Transverse colon (tissue), 4 donors: ENCODE measurements at regions of chr1 and their contacts with region 1.

Region 1: GRCh38 chr1:67853704-67854103 is 20.4 kb upstream of the GNG12 start:
- DNase-seq: peak; percentile 52
- H3K4me3 ChIP-seq: no peak overlapping the region
- H3K27ac ChIP-seq: no peak overlapping the region
- H3K4me1 ChIP-seq: peaks cover 5 to 12% (median 8%) of the 10 kb centered on the region in 4 donors
- H3K27me3 ChIP-seq: no peaks in the 10 kb centered on the region
- CTCF ChIP-seq: peak; percentile 48 to 75 (median 61)
- EP300 ChIP-seq: no peak
- POLR2A ChIP-seq: no peak

Region 2: GRCh38 chr1:68103884-68104554 is 250.3 kb after region 1 on chr1:
- in situ Hi-C with region 1: loop called in 1 of 4 experiments (anchors 10 kb)
- intact Hi-C with region 1: no loop called
- DNase-seq: no peak
- H3K4me3 ChIP-seq: no peak overlapping the region
- H3K27ac ChIP-seq: no peak overlapping the region
- H3K4me1 ChIP-seq: peaks cover 0 to 31% (median 19%) of the 10 kb centered on the region in 4 donors
- H3K27me3 ChIP-seq: no peaks in the 10 kb centered on the region
- CTCF ChIP-seq: no peak
- EP300 ChIP-seq: no peak
- POLR2A ChIP-seq: no peak

Region 3: GRCh38 chr1:68331117-68331865 is 477.6 kb after region 1 on chr1:
- in situ Hi-C with region 1: loop called in 3 of 4 experiments (anchors 10 to 25 kb)
- intact Hi-C with region 1: no loop called
- DNase-seq: no peak
- H3K4me3 ChIP-seq: no peak overlapping the region
- H3K27ac ChIP-seq: no peak overlapping the region
- H3K4me1 ChIP-seq: no peaks in the 10 kb centered on the region
- H3K27me3 ChIP-seq: no peaks in the 10 kb centered on the region
- CTCF ChIP-seq: no peak
- EP300 ChIP-seq: no peak
- POLR2A ChIP-seq: no peak

Region 4: DNA sequence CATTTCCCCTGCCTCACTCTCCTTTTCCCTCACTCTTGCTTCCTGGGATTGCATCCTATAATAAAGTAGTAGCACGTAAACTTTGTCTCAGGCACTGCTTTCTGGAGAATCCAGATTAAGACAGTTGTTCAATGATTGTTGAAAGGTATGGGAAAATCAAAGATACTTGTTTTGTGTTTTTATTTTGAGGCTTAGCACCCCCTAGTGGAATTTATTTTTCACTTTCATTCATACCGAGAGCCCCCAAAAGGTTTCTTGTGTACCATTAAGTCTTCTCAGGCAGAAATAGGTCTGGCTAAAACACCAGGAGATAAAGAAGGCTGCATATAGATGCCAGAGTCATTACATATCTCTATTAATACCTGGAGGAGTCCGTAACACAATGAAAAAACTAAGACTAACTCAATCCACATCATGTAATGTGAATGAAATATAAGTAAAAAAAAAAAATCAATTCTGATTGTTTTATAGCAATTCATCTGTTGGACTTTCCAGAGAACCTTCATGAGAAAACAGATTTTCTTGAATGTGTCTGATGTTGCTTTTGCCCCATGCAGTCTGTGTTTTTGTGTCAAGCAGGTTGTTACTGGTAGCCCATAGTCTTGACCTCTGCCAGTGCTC is 492.6 kb after region 1 on chr1:
- in situ Hi-C with region 1: loop called in 3 of 4 experiments (anchors 10 to 25 kb)
- intact Hi-C with region 1: no loop called
- DNase-seq: no peak
- H3K4me3 ChIP-seq: no peak overlapping the region
- H3K27ac ChIP-seq: no peak overlapping the region
- H3K4me1 ChIP-seq: no peaks in the 10 kb centered on the region
- H3K27me3 ChIP-seq: no peaks in the 10 kb centered on the region
- CTCF ChIP-seq: peak; percentile 27 to 50 (median 42)
- EP300 ChIP-seq: no peak
- POLR2A ChIP-seq: no peak

Region 5: DNA sequence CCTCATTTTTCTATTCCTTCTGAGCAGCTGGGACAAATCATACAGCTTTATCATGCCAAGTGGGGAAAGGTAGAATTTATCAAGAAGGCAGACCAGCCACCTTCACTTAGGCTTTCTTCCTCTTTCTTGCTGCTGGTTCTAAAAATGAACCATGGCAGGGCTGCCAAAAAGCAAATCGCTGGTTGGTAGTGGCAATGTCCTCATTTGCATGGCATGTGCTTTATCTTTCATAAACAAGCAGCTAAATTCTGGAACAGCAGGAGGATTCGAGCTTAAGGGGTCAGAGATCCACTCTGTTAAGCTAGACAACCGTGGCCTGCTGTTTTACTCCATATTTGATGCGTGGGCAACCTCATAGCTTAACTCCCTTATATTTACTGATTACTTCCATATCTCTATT is 504.7 kb after region 1 on chr1:
- in situ Hi-C with region 1: loop called in 1 of 4 experiments (anchors 10 kb)
- intact Hi-C with region 1: no loop called
- DNase-seq: no peak
- H3K4me3 ChIP-seq: no peak overlapping the region
- H3K27ac ChIP-seq: no peak overlapping the region
- H3K4me1 ChIP-seq: peaks cover 0 to 19% (median 0%) of the 10 kb centered on the region in 4 donors
- H3K27me3 ChIP-seq: no peaks in the 10 kb centered on the region
- CTCF ChIP-seq: no peak
- EP300 ChIP-seq: no peak
- POLR2A ChIP-seq: no peak